ENCODE measurements at regions of chr10 and their contacts with region 1.

Region 1: GRCh38 chr10:112261281-112261822 is 21.8 kb upstream of the TECTB start:
- DNase-seq: peak; percentile 100
- ATAC-seq: peak; percentile 95
- H3K4me3 ChIP-seq: peak overlapping the region in 1 of 3 experiments; percentile 13; a peak in 1 of 6 replicates
- H3K27ac ChIP-seq: peak overlapping the region; percentile 98
- H3K4me1 ChIP-seq: peaks cover 92% of the 10 kb centered on the region
- H3K27me3 ChIP-seq: no peaks in the 10 kb centered on the region
- CTCF ChIP-seq: no peak
- EP300 ChIP-seq: peak; percentile 98 to 100
- POLR2A ChIP-seq: peak in 1 of 2 experiments; percentile 57; a peak in 1 of 4 replicates
- RAD21 ChIP-seq: peak; percentile 40

Region 2: DNA sequence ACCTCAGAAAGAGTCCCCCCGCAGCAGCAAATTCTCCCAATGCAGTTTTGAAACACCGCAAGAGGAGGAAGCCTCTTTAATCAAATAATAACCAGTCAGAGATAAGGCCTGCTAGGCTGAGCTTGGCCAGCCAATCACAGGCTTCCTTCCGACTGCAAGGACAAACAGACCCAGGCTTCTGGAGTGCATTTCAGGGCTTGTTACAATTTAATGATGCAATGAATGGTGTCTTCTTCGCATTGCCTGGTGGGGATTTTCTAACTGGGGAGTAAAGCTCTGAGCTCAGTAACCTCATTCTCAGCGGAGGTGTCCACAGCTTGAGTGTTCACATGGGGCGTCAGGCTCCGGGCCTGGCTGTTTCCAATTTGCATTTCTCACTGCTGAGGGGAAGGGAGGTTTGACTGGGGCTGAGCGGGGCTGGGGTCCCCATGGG is 46.0 kb before region 1 on chr10:
- CTCF ChIA-PET with region 1: no interaction called
- POLR2A ChIA-PET with region 1: interaction called, 11 read pairs
- in situ Hi-C with region 1: no loop called
- intact Hi-C with region 1: no loop called
- DNase-seq: peak; percentile 72
- ATAC-seq: peak; percentile 83
- H3K4me3 ChIP-seq: no peak overlapping the region
- H3K27ac ChIP-seq: peak overlapping the region; percentile 51
- H3K4me1 ChIP-seq: peaks cover 88% of the 10 kb centered on the region
- H3K27me3 ChIP-seq: no peaks in the 10 kb centered on the region
- CTCF ChIP-seq: no peak
- EP300 ChIP-seq: no peak
- POLR2A ChIP-seq: no peak
- RAD21 ChIP-seq: no peak

Region 3: GRCh38 chr10:112271982-112272381 is 10.6 kb after region 1 on chr10:
- CTCF ChIA-PET with region 1: no interaction called
- POLR2A ChIA-PET with region 1: interaction called, 116 read pairs
- in situ Hi-C with region 1: no loop called
- intact Hi-C with region 1: loop called (anchors 1 kb)
- DNase-seq: no peak
- ATAC-seq: no peak
- H3K4me3 ChIP-seq: no peak overlapping the region
- H3K27ac ChIP-seq: no peak overlapping the region
- H3K4me1 ChIP-seq: peaks cover 51% of the 10 kb centered on the region
- H3K27me3 ChIP-seq: no peaks in the 10 kb centered on the region
- CTCF ChIP-seq: no peak
- EP300 ChIP-seq: no peak
- POLR2A ChIP-seq: no peak
- RAD21 ChIP-seq: no peak

Region 4: DNA sequence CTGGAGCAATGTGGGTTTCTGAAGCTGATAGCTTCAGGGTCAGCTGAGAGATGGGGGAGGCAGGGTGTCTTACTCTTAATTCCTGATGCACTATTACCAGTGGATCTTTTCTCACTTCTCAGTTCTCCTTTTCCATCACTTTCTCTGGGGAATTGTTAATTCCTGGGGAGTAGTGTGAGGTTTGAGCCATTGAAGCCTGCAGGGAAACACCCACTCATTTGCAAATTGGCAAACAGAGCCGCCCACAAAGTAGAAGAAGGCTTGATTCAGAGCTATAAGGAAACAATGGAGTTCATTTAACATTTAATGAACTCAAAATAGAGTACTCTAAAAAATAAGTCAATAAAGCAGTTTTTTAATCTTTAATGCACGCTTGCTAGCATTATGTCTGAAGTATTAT is 17.5 kb after region 1 on chr10:
- CTCF ChIA-PET with region 1: no interaction called
- POLR2A ChIA-PET with region 1: interaction called, 116 read pairs
- in situ Hi-C with region 1: no loop called
- intact Hi-C with region 1: loop called (anchors 1 kb)
- DNase-seq: no peak
- ATAC-seq: no peak
- H3K4me3 ChIP-seq: no peak overlapping the region
- H3K27ac ChIP-seq: peak overlapping the region; percentile 60
- H3K4me1 ChIP-seq: peaks cover 77% of the 10 kb centered on the region
- H3K27me3 ChIP-seq: no peaks in the 10 kb centered on the region
- CTCF ChIP-seq: no peak
- EP300 ChIP-seq: no peak
- POLR2A ChIP-seq: no peak
- RAD21 ChIP-seq: no peak

Region 5: GRCh38 chr10:112286837-112287818 is 25.8 kb after region 1 on chr10:
- CTCF ChIA-PET with region 1: no interaction called
- POLR2A ChIA-PET with region 1: interaction called, 11 read pairs
- in situ Hi-C with region 1: no loop called
- intact Hi-C with region 1: no loop called
- DNase-seq: peak; percentile 76
- ATAC-seq: peak; percentile 93
- H3K4me3 ChIP-seq: no peak overlapping the region; a peak in 1 of 6 replicates
- H3K27ac ChIP-seq: peak overlapping the region; percentile 68
- H3K4me1 ChIP-seq: peaks cover 79% of the 10 kb centered on the region
- H3K27me3 ChIP-seq: no peaks in the 10 kb centered on the region
- CTCF ChIP-seq: no peak
- EP300 ChIP-seq: peak in 1 of 2 experiments; percentile 90; a peak in 2 of 4 replicates
- POLR2A ChIP-seq: no peak
- RAD21 ChIP-seq: no peak

Region 6: DNA sequence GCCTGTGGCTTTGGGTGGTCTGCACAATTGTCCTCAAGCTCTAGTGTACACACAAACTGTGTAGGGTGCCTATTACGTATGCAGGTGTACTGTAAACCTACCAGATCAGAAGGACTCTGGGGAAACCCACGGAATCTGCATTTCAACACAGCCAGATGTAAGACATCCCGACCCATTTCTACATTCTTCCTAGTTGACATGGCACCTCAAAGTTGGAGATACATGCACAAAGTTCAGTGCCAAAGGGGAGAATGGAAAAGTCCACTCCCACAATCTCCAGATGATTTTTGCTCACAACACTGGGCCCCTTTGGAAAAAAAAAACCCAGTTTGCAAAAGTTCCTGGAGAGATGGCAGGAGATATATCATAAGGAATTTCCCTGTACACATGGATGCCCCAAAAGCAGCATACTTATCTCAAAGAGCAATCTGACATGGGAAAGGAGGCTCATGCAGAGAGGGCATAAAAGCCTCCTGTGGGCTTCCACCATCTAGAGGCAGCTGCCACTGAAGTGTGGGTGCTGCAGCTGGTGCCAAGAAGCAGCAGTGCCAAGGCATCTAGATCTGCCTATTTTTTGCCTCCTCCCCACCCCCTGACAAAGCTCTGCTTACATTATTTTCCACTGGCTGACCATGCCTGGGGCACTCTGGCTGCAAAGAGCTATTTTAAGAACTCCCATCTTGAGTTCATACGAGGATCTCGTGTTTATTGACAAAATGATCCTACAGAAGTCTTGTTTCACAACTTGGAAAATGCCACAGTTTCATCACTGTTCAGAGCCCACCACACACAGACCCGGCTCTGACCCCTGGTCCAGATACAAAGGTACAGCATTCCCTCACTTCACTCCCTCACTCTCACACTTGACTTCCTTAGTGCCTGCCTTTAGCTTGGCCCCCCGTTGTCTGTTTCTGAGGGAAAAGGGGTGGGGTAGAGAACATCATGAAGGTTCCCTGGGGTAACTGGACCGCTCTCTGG is 34.8 kb after region 1 on chr10:
- CTCF ChIA-PET with region 1: no interaction called
- POLR2A ChIA-PET with region 1: interaction called, 63 read pairs
- in situ Hi-C with region 1: no loop called
- intact Hi-C with region 1: loop called (anchors 1 kb)
- DNase-seq: peak; percentile 76
- ATAC-seq: peak; percentile 77
- H3K4me3 ChIP-seq: peak overlapping the region; percentile 32 to 43 (median 41)
- H3K27ac ChIP-seq: peak overlapping the region; percentile 77
- H3K4me1 ChIP-seq: peaks cover 94% of the 10 kb centered on the region
- H3K27me3 ChIP-seq: no peaks in the 10 kb centered on the region
- CTCF ChIP-seq: no peak
- EP300 ChIP-seq: peak in 1 of 2 experiments; percentile 79; a peak in 2 of 4 replicates
- POLR2A ChIP-seq: peak in 1 of 2 experiments; percentile 15; a peak in 2 of 4 replicates
- RAD21 ChIP-seq: no peak

Region 7: GRCh38 chr10:112307358-112308124 is 46.2 kb after region 1 on chr10:
- CTCF ChIA-PET with region 1: no interaction called
- POLR2A ChIA-PET with region 1: interaction called, 63 read pairs
- in situ Hi-C with region 1: no loop called
- intact Hi-C with region 1: loop called (anchors 1 kb)
- DNase-seq: peak; percentile 61
- ATAC-seq: peak; percentile 87
- H3K4me3 ChIP-seq: no peak overlapping the region; a peak in 1 of 6 replicates
- H3K27ac ChIP-seq: peak overlapping the region; percentile 44
- H3K4me1 ChIP-seq: peaks cover 93% of the 10 kb centered on the region
- H3K27me3 ChIP-seq: no peaks in the 10 kb centered on the region
- CTCF ChIP-seq: peak; percentile 92
- EP300 ChIP-seq: no peak; a peak in 1 of 4 replicates
- POLR2A ChIP-seq: no peak
- RAD21 ChIP-seq: peak; percentile 95